Endothelial cell of umbilical vein (primary cell): ENCODE measurements at regions of chr13 and their contacts with region 1.

Region 1: DNA sequence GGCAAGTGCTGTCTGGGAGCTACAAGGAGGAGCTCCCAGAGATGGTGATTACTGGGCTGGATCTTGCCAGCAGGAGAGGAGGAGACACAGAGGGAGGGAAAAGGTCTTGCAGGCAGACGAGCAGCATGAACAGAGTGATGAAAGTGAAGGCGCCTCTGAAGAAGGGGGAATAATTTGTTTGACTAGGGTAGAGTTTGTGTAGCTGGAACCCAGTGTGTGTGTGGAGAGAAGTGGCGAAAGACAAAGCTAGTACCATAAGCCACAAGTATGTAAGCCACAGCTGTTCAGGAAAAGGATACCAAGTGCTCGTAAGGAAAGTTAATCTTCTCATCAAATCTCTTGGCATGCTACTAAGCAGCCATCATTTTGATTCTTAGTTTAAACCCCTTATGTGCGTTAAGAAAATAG is 5.4 kb downstream of the FLT1 start:
- DNase-seq: peak; percentile 55
- H3K4me3 ChIP-seq: no peak overlapping the region
- H3K27ac ChIP-seq: peak overlapping the region; percentile 76
- H3K4me1 ChIP-seq: peaks cover 46% of the 10 kb centered on the region
- H3K27me3 ChIP-seq: no peaks in the 10 kb centered on the region
- CTCF ChIP-seq: no peak
- POLR2A ChIP-seq: no peak

Region 2: DNA sequence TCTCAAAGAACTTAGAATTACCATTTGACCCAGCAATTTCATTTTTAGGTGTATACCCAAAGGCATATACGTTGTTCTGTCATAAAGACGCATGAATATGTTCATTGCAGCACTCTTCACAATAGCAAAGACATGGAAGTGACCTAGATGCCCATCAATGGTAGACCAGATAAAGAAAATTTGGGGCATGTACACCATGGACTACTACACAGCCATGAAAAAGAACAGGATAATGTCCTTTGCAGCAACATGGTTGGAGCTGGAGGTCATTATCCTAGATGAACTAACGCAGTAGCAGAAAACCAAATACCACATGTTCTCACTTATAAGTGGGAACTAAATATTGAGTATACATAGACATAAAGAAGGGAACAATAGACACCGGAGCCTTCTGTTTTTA is 330.5 kb before region 1 on chr13:
- CTCF ChIA-PET with region 1: no interaction called
- POLR2A ChIA-PET with region 1: no interaction called
- dilution Hi-C with region 1: no loop called
- intact Hi-C with region 1: no loop called
- DNase-seq: no peak
- H3K4me3 ChIP-seq: no peak overlapping the region
- H3K27ac ChIP-seq: no peak overlapping the region
- H3K4me1 ChIP-seq: peaks cover 2% of the 10 kb centered on the region
- H3K27me3 ChIP-seq: no peaks in the 10 kb centered on the region
- CTCF ChIP-seq: no peak
- POLR2A ChIP-seq: no peak

Region 3: DNA sequence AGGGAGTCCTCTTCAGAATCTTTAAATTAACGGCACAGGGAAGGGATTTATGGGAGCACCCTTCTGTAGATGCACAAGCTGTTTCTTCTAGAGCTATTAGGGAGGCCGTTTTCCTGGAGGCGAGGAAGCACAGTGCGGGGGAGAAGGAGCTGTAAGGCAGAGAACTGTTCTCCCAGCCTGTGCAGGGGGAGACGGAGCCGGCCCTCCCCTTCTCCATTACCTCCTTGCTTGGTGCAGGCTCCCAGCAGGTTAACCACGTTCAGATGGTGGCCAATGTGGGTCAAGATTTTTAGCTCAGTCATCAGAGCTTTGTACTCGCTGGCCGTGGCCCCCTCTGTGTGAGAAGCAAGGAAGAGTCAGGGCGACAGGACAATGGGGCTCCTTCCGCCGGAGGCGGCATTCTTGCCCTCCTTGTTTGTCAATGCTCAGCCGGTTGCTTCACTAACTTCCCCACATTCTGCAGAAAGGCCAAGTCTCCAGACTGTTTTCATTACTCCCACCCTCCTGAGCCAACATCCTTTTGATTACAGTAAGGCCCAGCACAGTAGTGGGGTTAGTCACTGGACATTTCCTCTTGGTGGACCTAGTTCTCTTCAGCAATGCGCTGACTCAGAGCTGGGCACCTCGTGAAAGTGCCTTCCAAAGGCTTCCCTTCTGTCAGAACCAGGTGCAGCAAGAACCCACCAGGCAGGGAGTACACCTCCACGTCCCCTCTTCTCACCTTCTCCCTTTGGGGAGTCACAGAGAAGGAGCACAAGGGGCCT is 160.0 kb before region 1 on chr13:
- CTCF ChIA-PET with region 1: interaction called, 12 read pairs
- POLR2A ChIA-PET with region 1: interaction called, 3 read pairs
- dilution Hi-C with region 1: loop called (anchors 25 kb)
- intact Hi-C with region 1: loop called (anchors 2 kb)
- DNase-seq: peak; percentile 99
- H3K4me3 ChIP-seq: no peak overlapping the region
- H3K27ac ChIP-seq: peak overlapping the region; percentile 98
- H3K4me1 ChIP-seq: peaks cover 57% of the 10 kb centered on the region
- H3K27me3 ChIP-seq: no peaks in the 10 kb centered on the region
- CTCF ChIP-seq: no peak
- POLR2A ChIP-seq: peak; percentile 77

Region 4: DNA sequence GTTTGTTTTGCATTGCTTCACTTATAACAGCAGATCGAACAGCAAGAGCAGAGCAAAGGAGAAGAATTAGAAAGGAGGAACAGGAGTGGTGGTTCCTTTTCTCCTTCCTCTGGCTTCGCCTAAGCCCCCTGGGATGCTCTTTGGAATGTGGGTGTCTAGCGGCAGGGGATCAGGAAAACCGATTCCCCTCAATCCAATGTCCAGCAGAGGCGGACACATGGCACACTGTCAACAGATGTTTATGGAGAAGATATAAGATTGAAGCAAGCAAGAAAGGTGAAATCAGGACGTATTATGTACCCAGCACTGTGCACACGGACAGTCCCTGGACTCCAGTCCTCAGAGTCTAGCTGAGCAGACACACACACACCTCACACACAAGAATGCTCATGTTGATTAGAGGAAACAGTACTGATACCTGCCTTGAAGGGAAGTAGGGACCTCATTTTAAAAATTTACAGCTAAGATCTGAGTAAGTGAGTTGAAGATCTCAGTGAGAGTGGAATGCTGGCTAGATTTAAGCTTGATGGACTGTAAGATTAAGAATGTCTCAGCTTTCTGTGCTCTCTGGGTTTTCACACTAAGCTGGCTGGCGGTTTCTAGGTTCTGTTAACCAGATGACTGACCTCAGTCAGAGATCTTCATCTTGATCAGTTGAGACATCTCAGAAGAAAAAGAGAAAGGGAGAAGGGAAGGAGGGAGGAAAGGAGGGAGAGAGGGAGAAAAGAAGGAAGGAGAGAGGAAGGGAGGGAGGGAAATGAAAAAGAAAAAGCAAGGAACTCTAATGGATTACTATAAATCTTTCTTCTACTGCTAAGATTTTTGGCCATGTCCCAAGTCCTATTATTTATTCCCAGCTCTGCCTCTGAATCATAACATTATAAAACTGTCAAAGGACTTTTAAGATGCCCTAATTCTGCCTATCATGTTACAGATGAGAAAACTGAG is 39.4 kb before region 1 on chr13:
- CTCF ChIA-PET with region 1: interaction called, 9 read pairs
- POLR2A ChIA-PET with region 1: interaction called, 4 read pairs
- dilution Hi-C with region 1: no loop called
- intact Hi-C with region 1: loop called (anchors 1 kb)
- DNase-seq: peak; percentile 77
- H3K4me3 ChIP-seq: no peak overlapping the region
- H3K27ac ChIP-seq: peak overlapping the region; percentile 58
- H3K4me1 ChIP-seq: peaks cover 28% of the 10 kb centered on the region
- H3K27me3 ChIP-seq: no peaks in the 10 kb centered on the region
- CTCF ChIP-seq: no peak
- POLR2A ChIP-seq: no peak

Region 5: GRCh38 chr13:28475916-28476725 is 13.4 kb before region 1 on chr13:
- CTCF ChIA-PET with region 1: interaction called, 28 read pairs
- POLR2A ChIA-PET with region 1: no interaction called
- dilution Hi-C with region 1: no loop called
- intact Hi-C with region 1: loop called (anchors 1 kb)
- DNase-seq: peak; percentile 86
- H3K4me3 ChIP-seq: no peak overlapping the region
- H3K27ac ChIP-seq: peak overlapping the region; percentile 59
- H3K4me1 ChIP-seq: peaks cover 61% of the 10 kb centered on the region
- H3K27me3 ChIP-seq: no peaks in the 10 kb centered on the region
- CTCF ChIP-seq: no peak
- POLR2A ChIP-seq: no peak

Region 6: DNA sequence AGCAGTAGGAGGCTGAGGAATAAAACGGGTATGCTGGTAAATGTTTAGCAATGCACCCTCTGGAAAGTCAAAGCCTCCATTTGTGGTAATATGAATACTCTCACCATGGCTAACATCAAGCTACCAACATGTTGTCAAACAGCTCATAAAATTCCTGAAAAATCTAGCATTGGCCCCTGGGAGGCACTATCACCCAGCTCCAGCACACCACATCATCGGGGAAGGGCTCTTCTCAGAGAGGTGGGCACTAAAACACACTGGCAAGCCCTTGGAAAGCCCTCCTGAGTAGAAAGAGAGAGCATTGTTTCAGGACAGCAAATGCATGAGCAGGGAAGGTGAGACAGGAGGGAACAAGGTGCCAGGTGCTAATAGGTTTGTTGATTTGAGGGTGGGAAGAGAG is 59.3 kb after region 1 on chr13:
- CTCF ChIA-PET with region 1: no interaction called
- POLR2A ChIA-PET with region 1: no interaction called
- dilution Hi-C with region 1: no loop called
- intact Hi-C with region 1: no loop called
- DNase-seq: no peak
- H3K4me3 ChIP-seq: no peak overlapping the region
- H3K27ac ChIP-seq: no peak overlapping the region
- H3K4me1 ChIP-seq: no peaks in the 10 kb centered on the region
- H3K27me3 ChIP-seq: no peaks in the 10 kb centered on the region
- CTCF ChIP-seq: no peak
- POLR2A ChIP-seq: no peak

Region 7: GRCh38 chr13:28574617-28575142 is 85.2 kb after region 1 on chr13:
- CTCF ChIA-PET with region 1: no interaction called
- POLR2A ChIA-PET with region 1: no interaction called
- dilution Hi-C with region 1: no loop called
- intact Hi-C with region 1: loop called (anchors 2 kb)
- DNase-seq: peak; percentile 98
- H3K4me3 ChIP-seq: no peak overlapping the region
- H3K27ac ChIP-seq: peak overlapping the region; percentile 99
- H3K4me1 ChIP-seq: peaks cover 10% of the 10 kb centered on the region
- H3K27me3 ChIP-seq: no peaks in the 10 kb centered on the region
- CTCF ChIP-seq: no peak
- POLR2A ChIP-seq: no peak

Region 8: GRCh38 chr13:29050719-29051118 is 561.2 kb after region 1 on chr13:
- CTCF ChIA-PET with region 1: no interaction called
- POLR2A ChIA-PET with region 1: no interaction called
- dilution Hi-C with region 1: no loop called
- intact Hi-C with region 1: no loop called
- DNase-seq: no peak
- H3K4me3 ChIP-seq: no peak overlapping the region
- H3K27ac ChIP-seq: no peak overlapping the region
- H3K4me1 ChIP-seq: no peaks in the 10 kb centered on the region
- H3K27me3 ChIP-seq: no peaks in the 10 kb centered on the region
- CTCF ChIP-seq: no peak
- POLR2A ChIP-seq: no peak

Region 9: DNA sequence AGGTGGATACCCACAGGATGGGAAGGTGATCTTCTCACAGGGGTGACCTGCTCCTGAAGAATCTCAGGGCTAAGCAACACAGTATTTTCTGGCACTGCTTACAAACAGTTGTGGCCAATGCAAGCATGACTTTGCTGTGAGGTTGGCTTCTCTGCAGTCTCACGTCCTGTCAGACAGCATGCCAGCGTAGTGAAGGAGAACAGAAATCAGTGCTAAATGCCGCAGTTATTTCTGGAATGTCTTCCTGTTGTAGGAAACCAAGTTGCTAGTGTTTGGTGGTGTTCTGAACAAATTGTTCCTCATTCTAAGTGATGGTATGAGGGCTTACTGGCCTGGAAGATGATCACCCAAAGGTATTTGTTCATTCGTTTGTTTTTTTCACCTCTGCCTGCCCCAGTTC is 650.7 kb after region 1 on chr13:
- CTCF ChIA-PET with region 1: no interaction called
- POLR2A ChIA-PET with region 1: no interaction called
- dilution Hi-C with region 1: no loop called
- intact Hi-C with region 1: no loop called
- DNase-seq: no peak
- H3K4me3 ChIP-seq: no peak overlapping the region
- H3K27ac ChIP-seq: no peak overlapping the region
- H3K4me1 ChIP-seq: no peaks in the 10 kb centered on the region
- H3K27me3 ChIP-seq: no peaks in the 10 kb centered on the region
- CTCF ChIP-seq: no peak
- POLR2A ChIP-seq: no peak